ENCODE measurements at regions of chrX and their contacts with region 1.

Region 1: GRCh38 chrX:64975989-64976672 is at the start of gene ZC4H2:
- DNase-seq: peak; percentile 7
- ATAC-seq: peak; percentile 69
- H3K4me3 ChIP-seq: peak within 1 kb of the TSS; percentile 65
- H3K27ac ChIP-seq: no peak within 1 kb of the TSS
- H3K4me1 ChIP-seq: no peaks in the 10 kb centered on the region
- H3K27me3 ChIP-seq: no peaks in the 10 kb centered on the region
- CTCF ChIP-seq: no peak
- EP300 ChIP-seq: no peak
- POLR2A ChIP-seq: no peak
- RAD21 ChIP-seq: no peak
- polyA plus RNA-seq, gene ZC4H2: 0.27 to 0.38 TPM

Region 2: DNA sequence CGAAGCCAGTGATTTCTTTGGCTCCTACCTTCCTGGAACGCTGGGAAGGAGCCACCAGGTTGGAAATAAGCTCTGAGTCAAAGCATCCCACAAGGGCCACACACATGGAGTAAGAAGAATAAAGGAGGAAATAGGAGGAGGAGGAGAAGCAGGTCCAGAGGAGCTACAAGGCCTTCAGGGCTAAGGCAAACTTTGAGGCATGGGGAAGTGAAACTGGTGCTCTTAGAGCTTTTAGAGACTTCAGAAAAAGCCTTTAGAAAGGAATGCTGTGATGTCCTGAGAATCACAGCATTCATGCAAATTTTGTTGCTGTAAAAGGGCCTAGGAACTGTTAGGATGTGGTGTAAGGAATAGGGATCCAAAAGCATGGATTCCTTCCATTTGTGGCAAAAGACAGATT is 1055.3 kb before region 1 on chrX:
- CTCF ChIA-PET with region 1: no interaction called
- POLR2A ChIA-PET with region 1: interaction called, 12 read pairs
- RAD21 ChIA-PET with region 1: no interaction called
- SMC1A ChIA-PET with region 1: no interaction called
- in situ Hi-C with region 1: no loop called
- intact Hi-C with region 1: no loop called
- DNase-seq: no peak
- ATAC-seq: no peak
- H3K4me3 ChIP-seq: no peak overlapping the region
- H3K27ac ChIP-seq: no peak overlapping the region
- H3K4me1 ChIP-seq: no peaks in the 10 kb centered on the region
- H3K27me3 ChIP-seq: no peaks in the 10 kb centered on the region
- CTCF ChIP-seq: no peak
- EP300 ChIP-seq: no peak
- POLR2A ChIP-seq: no peak
- RAD21 ChIP-seq: no peak

Region 3: GRCh38 chrX:64925480-64925879 is 50.7 kb before region 1 on chrX:
- CTCF ChIA-PET with region 1: no interaction called
- POLR2A ChIA-PET with region 1: no interaction called
- RAD21 ChIA-PET with region 1: no interaction called
- SMC1A ChIA-PET with region 1: no interaction called
- in situ Hi-C with region 1: no loop called
- intact Hi-C with region 1: no loop called
- DNase-seq: no peak
- ATAC-seq: no peak
- H3K4me3 ChIP-seq: no peak overlapping the region
- H3K27ac ChIP-seq: no peak overlapping the region
- H3K4me1 ChIP-seq: no peaks in the 10 kb centered on the region
- H3K27me3 ChIP-seq: no peaks in the 10 kb centered on the region
- CTCF ChIP-seq: no peak
- EP300 ChIP-seq: no peak
- POLR2A ChIP-seq: no peak
- RAD21 ChIP-seq: no peak